ENCODE measurements at regions of chr4 and their contacts with region 1.

Region 1: GRCh38 chr4:186037692-186038658 is 31.0 kb upstream of the TLR3 start:
- DNase-seq: peak; percentile 85
- H3K4me3 ChIP-seq: no peak overlapping the region
- H3K27ac ChIP-seq: no peak overlapping the region
- H3K4me1 ChIP-seq: no peaks in the 10 kb centered on the region
- H3K27me3 ChIP-seq: peaks cover 3 to 5% of the 10 kb centered on the region in 2 experiments
- CTCF ChIP-seq: peak; percentile 55 to 59
- POLR2A ChIP-seq: no peak

Region 2: GRCh38 chr4:185039508-185040273 is 998.3 kb before region 1 on chr4:
- CTCF ChIA-PET with region 1: interaction called, 50 read pairs
- POLR2A ChIA-PET with region 1: no interaction called
- dilution Hi-C with region 1: no loop called
- intact Hi-C with region 1: loop called (anchors 1 kb)
- DNase-seq: peak; percentile 68
- H3K4me3 ChIP-seq: no peak overlapping the region
- H3K27ac ChIP-seq: no peak overlapping the region
- H3K4me1 ChIP-seq: no peaks in the 10 kb centered on the region
- H3K27me3 ChIP-seq: peaks cover 0 to 3% of the 10 kb centered on the region in 2 experiments
- CTCF ChIP-seq: peak; percentile 73 to 76
- POLR2A ChIP-seq: no peak

Region 3: DNA sequence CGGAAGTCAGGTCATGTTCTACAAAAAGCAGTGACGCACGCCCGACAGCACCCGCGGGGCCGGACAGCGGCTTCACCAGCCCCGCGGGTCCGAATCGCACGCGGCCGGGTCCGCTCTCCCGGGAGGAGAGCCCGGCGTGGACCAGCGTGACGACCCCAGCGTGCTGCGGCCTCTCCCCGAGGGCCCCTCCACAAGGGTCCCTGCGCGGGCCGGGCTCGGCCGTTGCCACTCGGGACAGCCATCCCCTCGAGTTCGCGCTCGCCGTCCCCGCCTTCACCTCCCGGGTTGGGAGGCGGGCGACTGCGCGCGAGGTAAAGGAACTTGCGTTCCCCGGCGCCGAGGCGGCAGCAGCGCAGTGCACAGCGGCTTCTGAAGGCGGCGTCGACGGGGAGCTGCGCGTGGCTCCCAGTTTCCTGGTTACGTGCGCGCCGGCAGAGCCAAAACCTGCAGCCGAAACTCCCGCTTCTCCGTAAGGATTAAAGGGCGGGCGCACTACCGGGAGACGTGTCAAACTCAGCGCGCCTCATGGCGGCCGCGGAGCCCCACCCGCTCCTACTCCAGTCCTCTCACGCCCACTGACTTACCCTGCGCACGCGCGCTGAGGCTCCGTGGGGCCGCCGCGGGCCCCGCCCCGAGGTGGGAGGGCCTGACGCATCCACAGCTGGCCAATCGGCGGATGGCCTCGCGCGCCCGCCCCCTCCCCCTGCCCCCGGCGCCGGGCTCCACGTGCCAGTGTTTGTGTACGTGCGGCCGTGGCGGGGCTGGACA is 641.8 kb before region 1 on chr4:
- CTCF ChIA-PET with region 1: interaction called, 6 read pairs
- POLR2A ChIA-PET with region 1: no interaction called
- dilution Hi-C with region 1: no loop called
- intact Hi-C with region 1: loop called (anchors 5 kb)
- DNase-seq: peak; percentile 99
- H3K4me3 ChIP-seq: peak overlapping the region; percentile 54 to 90 (median 87)
- H3K27ac ChIP-seq: peak overlapping the region; percentile 96
- H3K4me1 ChIP-seq: peaks cover 37% of the 10 kb centered on the region
- H3K27me3 ChIP-seq: no peaks in the 10 kb centered on the region
- CTCF ChIP-seq: no peak
- POLR2A ChIP-seq: peak; percentile 59

Region 4: GRCh38 chr4:185597532-185598188 is 440.3 kb before region 1 on chr4:
- CTCF ChIA-PET with region 1: interaction called, 57 read pairs
- POLR2A ChIA-PET with region 1: no interaction called
- dilution Hi-C with region 1: no loop called
- intact Hi-C with region 1: loop called (anchors 1 kb)
- DNase-seq: peak; percentile 84
- H3K4me3 ChIP-seq: no peak overlapping the region
- H3K27ac ChIP-seq: no peak overlapping the region
- H3K4me1 ChIP-seq: no peaks in the 10 kb centered on the region
- H3K27me3 ChIP-seq: no peaks in the 10 kb centered on the region
- CTCF ChIP-seq: peak; percentile 95 to 96
- POLR2A ChIP-seq: no peak

Region 5: GRCh38 chr4:185640811-185641675 is 396.9 kb before region 1 on chr4:
- CTCF ChIA-PET with region 1: interaction called, 211 read pairs
- POLR2A ChIA-PET with region 1: no interaction called
- dilution Hi-C with region 1: loop called (anchors 25 kb)
- intact Hi-C with region 1: loop called (anchors 1 kb)
- DNase-seq: peak; percentile 69
- H3K4me3 ChIP-seq: no peak overlapping the region
- H3K27ac ChIP-seq: no peak overlapping the region
- H3K4me1 ChIP-seq: no peaks in the 10 kb centered on the region
- H3K27me3 ChIP-seq: no peaks in the 10 kb centered on the region
- CTCF ChIP-seq: peak in 1 of 2 donors; percentile 33
- POLR2A ChIP-seq: no peak

Region 6: GRCh38 chr4:185774845-185775680 is 262.9 kb before region 1 on chr4:
- CTCF ChIA-PET with region 1: interaction called, 20 read pairs
- POLR2A ChIA-PET with region 1: no interaction called
- dilution Hi-C with region 1: no loop called
- intact Hi-C with region 1: no loop called
- DNase-seq: peak; percentile 92
- H3K4me3 ChIP-seq: peak overlapping the region; percentile 50 to 88 (median 62)
- H3K27ac ChIP-seq: peak overlapping the region; percentile 91
- H3K4me1 ChIP-seq: peaks cover 46% of the 10 kb centered on the region
- H3K27me3 ChIP-seq: no peaks in the 10 kb centered on the region
- CTCF ChIP-seq: no peak
- POLR2A ChIP-seq: peak; percentile 69

Measured in endothelial cell of umbilical vein (primary cell).